Endothelial cell of umbilical vein (primary cell): ENCODE measurements at regions of chr12 and their contacts with region 1.

Region 1: DNA sequence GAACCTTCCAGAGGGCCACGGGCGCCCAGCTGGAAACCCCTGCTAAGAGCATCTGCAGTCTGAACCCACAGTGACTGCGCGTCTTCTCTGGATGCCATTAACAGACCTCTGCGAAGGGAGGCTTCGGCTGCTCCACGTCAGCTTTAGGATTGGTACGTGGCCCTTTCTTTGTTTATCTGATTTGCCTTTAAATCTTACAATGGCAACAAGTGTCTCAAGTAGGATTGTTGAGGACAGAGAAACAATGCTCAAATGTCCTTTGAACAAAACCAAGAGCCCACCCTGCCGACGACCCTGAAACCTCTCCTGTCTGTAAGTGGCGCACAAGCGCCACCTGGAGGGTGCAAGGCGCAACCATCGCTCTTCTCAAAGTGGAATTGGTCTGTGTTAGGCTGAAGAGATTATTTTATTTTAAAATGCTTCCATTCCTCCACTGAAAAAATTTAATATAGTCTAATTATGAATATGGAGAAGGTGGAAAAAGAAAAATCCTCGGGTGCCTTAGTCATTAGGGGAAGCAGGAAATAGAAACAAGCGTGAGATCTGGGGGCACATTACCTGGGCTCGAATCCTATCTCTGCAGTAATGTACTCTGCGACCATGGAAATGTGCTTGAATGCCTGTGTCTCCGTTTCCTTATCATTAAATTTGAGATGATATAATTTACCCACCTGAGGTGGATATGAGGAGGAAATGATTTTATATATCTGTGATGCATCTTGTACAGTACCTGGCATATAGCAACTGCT is 82.6 kb upstream of the PTPRB start:
- DNase-seq: peak; percentile 83
- H3K4me3 ChIP-seq: peak overlapping the region in 2 of 3 experiments; percentile 22 to 48
- H3K27ac ChIP-seq: peak overlapping the region; percentile 34
- H3K4me1 ChIP-seq: peaks cover 30% of the 10 kb centered on the region
- H3K27me3 ChIP-seq: no peaks in the 10 kb centered on the region
- CTCF ChIP-seq: peak; percentile 86 to 96
- POLR2A ChIP-seq: no peak

Region 2: DNA sequence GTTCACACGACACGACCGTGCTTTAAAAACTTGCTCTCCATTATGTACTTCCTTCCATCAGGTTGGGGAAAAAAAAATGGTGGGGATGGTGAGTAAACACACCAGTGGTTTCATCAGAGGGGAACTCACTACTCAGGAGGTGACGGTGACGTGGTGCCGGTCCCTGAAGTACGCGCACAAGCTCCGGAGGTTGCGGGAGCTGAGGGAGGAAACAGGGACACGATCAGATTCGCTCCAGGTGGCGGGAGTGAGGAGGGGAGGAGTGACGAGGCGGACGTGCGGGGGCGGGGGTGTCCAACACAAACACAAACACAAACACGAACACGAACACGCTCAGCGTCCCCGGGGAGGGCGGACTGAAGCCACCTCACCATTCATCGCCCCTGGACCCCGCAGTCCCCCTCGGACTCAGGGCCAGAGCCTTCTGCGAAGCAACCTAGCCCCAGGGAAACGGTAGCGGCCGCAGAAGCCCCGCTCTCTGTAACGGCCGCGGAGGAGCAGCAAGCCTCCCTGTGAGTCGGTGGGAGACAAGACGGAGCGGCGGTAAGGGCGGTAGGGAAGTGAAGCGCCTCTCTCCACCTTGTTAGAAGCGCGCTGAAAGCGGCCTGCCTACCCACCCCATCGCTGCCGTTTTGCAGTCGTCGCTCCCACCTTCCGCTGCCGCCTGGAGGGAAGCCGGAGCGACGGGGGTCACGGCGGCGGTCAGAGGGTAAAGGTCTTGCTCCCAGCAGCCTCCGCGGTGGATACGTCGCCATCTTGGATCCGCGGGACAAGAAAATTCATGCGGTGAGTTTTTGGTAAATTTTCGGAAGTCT is 476.9 kb before region 1 on chr12 and contains the start of gene CNOT2:
- CTCF ChIA-PET with region 1: no interaction called
- POLR2A ChIA-PET with region 1: no interaction called
- dilution Hi-C with region 1: no loop called
- intact Hi-C with region 1: loop called (anchors 2 kb)
- DNase-seq: peak; percentile 93
- H3K4me3 ChIP-seq: peak within 1 kb of the TSS; percentile 83 to 97 (median 84)
- H3K27ac ChIP-seq: peak within 1 kb of the TSS; percentile 86
- H3K4me1 ChIP-seq: peaks cover 47% of the 10 kb centered on the region
- H3K27me3 ChIP-seq: no peaks in the 10 kb centered on the region
- CTCF ChIP-seq: no peak
- POLR2A ChIP-seq: peak; percentile 35
- total RNA-seq, gene CNOT2: 79.1 and 79.7 TPM in 2 replicates

Region 3: DNA sequence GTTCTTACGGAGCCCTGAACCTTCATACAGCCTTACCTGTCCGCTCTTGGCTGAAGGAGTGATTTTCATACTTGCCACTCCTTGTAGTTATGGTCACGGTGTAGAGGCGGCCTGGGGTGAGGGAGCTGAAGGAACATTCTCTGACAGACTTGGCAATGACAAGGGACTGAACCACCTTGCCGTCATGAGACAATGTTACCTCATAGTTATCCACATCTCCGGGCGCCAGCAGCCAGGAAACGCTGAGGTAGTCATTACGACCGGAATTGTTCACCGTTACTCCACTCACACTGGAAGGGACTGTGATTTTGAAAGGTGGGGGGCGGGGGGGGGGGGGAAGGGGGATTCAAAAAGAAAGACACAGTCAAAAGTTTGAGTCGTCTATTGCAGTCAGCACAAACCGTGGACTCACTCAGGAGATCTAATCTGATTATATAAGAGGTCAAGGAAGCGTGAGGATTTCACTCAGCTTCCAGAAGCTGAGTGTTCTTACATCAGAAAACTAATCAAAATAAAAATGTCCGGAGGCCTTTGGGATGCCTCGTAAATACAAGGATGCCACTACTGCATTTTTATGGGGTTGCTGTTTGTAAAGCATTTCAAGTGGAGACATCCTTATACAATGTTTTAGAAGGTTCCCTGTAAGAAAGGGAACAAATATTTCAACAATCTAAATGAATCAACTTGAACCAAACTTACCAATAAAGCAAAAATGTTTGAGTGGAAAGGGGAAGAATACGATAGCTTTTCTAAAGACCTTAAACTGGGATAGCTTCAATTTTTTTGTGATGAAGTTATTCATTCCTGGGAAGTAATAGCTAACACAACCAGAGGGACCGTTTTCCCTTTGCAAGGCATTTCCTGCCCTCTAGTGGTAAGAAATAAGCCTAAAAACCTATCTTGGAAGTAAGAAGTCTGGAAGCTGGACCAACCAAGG is 143.2 kb before region 1 on chr12:
- CTCF ChIA-PET with region 1: interaction called, 20 read pairs
- POLR2A ChIA-PET with region 1: no interaction called
- dilution Hi-C with region 1: no loop called
- intact Hi-C with region 1: loop called (anchors 1 kb)
- DNase-seq: peak; percentile 68
- H3K4me3 ChIP-seq: no peak overlapping the region
- H3K27ac ChIP-seq: peak overlapping the region; percentile 35
- H3K4me1 ChIP-seq: peaks cover 13% of the 10 kb centered on the region
- H3K27me3 ChIP-seq: no peaks in the 10 kb centered on the region
- CTCF ChIP-seq: peak; percentile 59 to 62
- POLR2A ChIP-seq: no peak

Region 4: DNA sequence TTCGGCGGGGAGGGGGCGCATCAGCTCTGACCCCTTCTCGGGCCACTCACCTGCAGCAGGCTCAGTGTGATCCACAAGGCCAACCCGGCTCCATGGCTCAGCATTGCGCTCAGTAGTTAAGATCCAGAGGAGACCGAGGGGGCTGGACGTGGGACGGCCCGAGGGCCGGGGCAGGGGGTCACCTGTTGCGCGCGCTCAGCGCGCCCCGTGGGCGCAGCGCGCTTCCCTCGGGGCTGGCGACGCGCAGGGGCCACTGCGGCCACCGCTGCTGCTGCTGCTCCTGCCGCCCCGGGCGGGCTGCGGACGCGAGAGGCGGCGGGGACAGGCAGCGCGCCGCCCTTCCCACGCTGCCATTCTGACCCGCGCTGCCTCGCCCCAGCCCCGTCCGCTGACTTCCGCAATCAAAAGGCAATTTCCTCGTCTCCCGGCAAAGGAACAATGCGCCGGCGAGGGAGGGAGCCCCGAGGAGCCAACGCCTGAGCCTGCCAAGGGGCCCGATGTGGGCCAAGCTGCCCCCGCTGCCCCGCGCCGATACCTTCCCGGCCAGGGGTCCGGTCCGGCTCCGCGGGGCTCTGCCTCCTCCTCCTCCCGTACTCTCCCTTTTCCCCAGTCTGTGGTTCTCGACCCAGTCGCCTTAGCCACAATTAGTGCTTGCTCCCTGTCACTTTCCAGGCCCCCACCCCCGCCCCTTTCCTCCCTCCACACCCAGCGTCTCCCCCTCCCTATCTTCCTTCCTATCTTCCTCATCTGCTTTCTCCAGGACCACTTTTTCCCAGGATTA is 109.9 kb before region 1 on chr12:
- CTCF ChIA-PET with region 1: interaction called, 35 read pairs
- POLR2A ChIA-PET with region 1: no interaction called
- dilution Hi-C with region 1: loop called (anchors 25 kb)
- intact Hi-C with region 1: loop called (anchors 1 kb)
- DNase-seq: peak; percentile 79
- H3K4me3 ChIP-seq: peak overlapping the region; percentile 33 to 49 (median 37)
- H3K27ac ChIP-seq: peak overlapping the region; percentile 77
- H3K4me1 ChIP-seq: peaks cover 67% of the 10 kb centered on the region
- H3K27me3 ChIP-seq: no peaks in the 10 kb centered on the region
- CTCF ChIP-seq: no peak
- POLR2A ChIP-seq: peak; percentile 45

Region 5: GRCh38 chr12:70645494-70646317 is 74.1 kb before region 1 on chr12:
- CTCF ChIA-PET with region 1: interaction called, 3 read pairs
- POLR2A ChIA-PET with region 1: no interaction called
- dilution Hi-C with region 1: no loop called
- intact Hi-C with region 1: loop called (anchors 1 kb)
- DNase-seq: peak; percentile 95
- H3K4me3 ChIP-seq: no peak overlapping the region
- H3K27ac ChIP-seq: peak overlapping the region; percentile 99
- H3K4me1 ChIP-seq: peaks cover 54% of the 10 kb centered on the region
- H3K27me3 ChIP-seq: no peaks in the 10 kb centered on the region
- CTCF ChIP-seq: no peak
- POLR2A ChIP-seq: peak; percentile 70

Region 6: GRCh38 chr12:70706611-70707010 is 13.2 kb before region 1 on chr12:
- CTCF ChIA-PET with region 1: interaction called, 13 read pairs
- POLR2A ChIA-PET with region 1: no interaction called
- dilution Hi-C with region 1: no loop called
- intact Hi-C with region 1: no loop called
- DNase-seq: no peak
- H3K4me3 ChIP-seq: no peak overlapping the region
- H3K27ac ChIP-seq: no peak overlapping the region
- H3K4me1 ChIP-seq: peaks cover 18% of the 10 kb centered on the region
- H3K27me3 ChIP-seq: no peaks in the 10 kb centered on the region
- CTCF ChIP-seq: no peak
- POLR2A ChIP-seq: no peak

Region 7: DNA sequence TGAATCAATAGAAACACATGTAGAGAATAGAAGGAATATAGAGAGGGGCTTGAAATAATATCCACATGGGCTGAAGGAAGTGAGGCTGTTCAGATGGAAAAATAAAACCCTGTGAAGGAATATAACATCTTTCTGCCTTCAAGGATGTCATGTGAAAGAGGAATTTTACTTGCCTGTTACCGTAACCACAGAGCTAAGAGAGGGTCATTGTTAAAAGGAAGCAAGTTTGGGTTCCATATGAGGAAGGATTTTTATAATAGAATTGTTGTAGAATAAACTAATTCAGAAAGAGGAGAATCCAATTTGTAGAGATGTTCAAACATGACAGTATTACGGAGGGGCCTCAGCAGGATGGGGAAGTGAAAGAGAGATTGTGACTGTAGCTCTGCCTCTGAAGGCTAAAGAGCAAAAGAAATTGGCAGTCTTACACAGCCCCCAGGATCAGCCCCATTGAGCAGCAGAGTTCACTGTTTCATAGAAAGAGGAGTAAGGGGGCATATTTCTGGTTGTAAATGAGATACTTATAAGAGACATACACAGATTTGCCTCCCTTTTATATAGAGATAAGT is 242.5 kb after region 1 on chr12:
- CTCF ChIA-PET with region 1: no interaction called
- POLR2A ChIA-PET with region 1: no interaction called
- dilution Hi-C with region 1: no loop called
- intact Hi-C with region 1: no loop called
- DNase-seq: no peak
- H3K4me3 ChIP-seq: no peak overlapping the region
- H3K27ac ChIP-seq: no peak overlapping the region
- H3K4me1 ChIP-seq: no peaks in the 10 kb centered on the region
- H3K27me3 ChIP-seq: no peaks in the 10 kb centered on the region
- CTCF ChIP-seq: no peak
- POLR2A ChIP-seq: no peak